HEK293 (cell line): ENCODE measurements at regions of chr2 and their contacts with region 1.

Region 1: GRCh38 chr2:36797324-36798070 is 101.0 kb downstream of the VIT start:
- H3K4me3 ChIP-seq: no peak overlapping the region
- H3K27ac ChIP-seq: no peak overlapping the region
- H3K4me1 ChIP-seq: no peaks in the 10 kb centered on the region
- CTCF ChIP-seq: no peak

Region 2: DNA sequence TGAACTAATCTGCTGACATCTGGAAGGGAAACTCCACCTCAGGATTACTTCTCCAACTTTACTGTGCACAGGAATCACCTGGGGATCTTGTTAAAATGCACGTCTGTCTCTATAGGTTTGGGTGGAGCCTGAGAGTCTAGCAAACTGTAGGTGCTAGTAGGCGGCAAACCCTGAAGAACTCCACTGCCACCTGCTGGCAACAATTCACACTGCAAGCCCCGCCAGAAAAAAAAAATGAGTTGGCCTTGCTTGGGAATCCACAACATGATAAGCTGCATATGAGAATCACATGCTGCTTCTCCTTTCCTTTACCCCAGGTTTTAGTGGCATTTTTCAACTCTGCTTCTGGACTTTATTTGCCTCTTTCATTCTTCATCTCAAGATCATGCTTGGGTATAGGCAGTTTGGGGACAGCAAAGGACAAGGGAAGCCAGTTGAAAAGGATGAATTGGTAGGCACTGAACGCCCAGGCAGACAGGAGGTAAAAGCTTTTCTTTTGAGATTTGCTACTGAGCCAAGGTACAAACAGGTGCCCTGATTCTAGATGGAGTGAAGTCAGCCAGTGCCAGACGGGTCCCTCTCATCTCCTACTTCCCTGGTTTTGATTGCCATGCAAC is 12.2 kb before region 1 on chr2:
- CTCF ChIA-PET with region 1: interaction called, 45 read pairs
- POLR2A ChIA-PET with region 1: no interaction called
- H3K4me3 ChIP-seq: no peak overlapping the region
- H3K27ac ChIP-seq: no peak overlapping the region
- H3K4me1 ChIP-seq: no peaks in the 10 kb centered on the region
- CTCF ChIP-seq: peak; percentile 53

Region 3: GRCh38 chr2:36871068-36871707 is 73.7 kb after region 1 on chr2:
- CTCF ChIA-PET with region 1: no interaction called
- POLR2A ChIA-PET with region 1: no interaction called
- H3K4me3 ChIP-seq: no peak overlapping the region
- H3K27ac ChIP-seq: no peak overlapping the region
- H3K4me1 ChIP-seq: no peaks in the 10 kb centered on the region
- CTCF ChIP-seq: no peak